CD4-positive, alpha-beta memory T cell (primary cell): ENCODE measurements at regions of chr12 and their contacts with region 1.

Region 1: DNA sequence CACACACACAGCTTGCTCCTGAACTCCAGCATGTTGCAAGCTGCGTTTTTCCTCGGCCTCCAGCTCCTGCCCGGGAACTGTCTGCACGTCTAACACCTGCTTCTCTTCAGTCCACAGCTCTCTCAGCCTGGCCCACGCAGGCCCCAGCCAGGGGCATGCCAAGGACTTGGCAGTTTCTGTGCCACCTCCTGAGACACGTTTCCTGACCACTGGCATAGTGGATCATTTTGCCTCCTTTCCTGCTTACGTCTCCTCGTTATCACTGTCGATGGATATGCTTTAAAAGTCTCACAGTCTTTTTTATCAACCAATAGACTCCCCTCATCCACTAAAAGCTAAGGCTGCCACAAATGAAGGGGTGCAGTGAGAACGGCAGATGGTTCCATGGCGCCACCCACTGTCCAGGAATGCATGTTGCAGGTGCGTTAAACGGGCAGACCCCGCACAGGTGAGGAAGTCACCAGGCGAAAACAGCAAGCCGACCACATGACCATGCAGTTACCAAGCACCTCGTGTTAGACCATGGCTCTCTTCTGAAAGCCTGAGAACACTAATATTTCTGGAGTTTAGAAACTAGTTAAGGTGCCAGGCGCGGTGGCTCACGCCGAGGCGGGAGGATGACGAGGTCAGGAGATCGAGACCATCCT is 14.7 kb upstream of the TEAD4 start:
- DNase-seq: peak in 4 of 5 donors; percentile 25 to 29 (median 28)
- H3K4me3 ChIP-seq: no peak overlapping the region
- H3K4me3 Mint-ChIP-seq: peak overlapping the region in 3 of 8 donors; percentile 39 to 57 (median 49)
- H3K27ac ChIP-seq: no peak overlapping the region
- H3K27ac Mint-ChIP-seq: peak overlapping the region in 1 of 7 donors; percentile 51
- H3K4me1 ChIP-seq: no peaks in the 10 kb centered on the region
- H3K4me1 Mint-ChIP-seq: peaks cover 0 to 4% (median 0%) of the 10 kb centered on the region in 4 donors
- H3K27me3 ChIP-seq: no peaks in the 10 kb centered on the region
- H3K27me3 Mint-ChIP-seq: peaks cover 1 to 3% of the 10 kb centered on the region in 2 donors

Region 2: GRCh38 chr12:2884810-2885209 is 59.7 kb before region 1 on chr12:
- CTCF ChIA-PET with region 1: interaction called, 11 read pairs
- POLR2A ChIA-PET with region 1: no interaction called
- intact Hi-C with region 1: no loop called
- DNase-seq: no peak
- H3K4me3 ChIP-seq: no peak overlapping the region
- H3K4me3 Mint-ChIP-seq: peak overlapping the region in 1 of 8 donors; percentile 24
- H3K27ac ChIP-seq: no peak overlapping the region
- H3K27ac Mint-ChIP-seq: peak overlapping the region in 3 of 7 donors; percentile 2 to 78 (median 71)
- H3K4me1 ChIP-seq: peaks cover 15% of the 10 kb centered on the region
- H3K4me1 Mint-ChIP-seq: peaks cover 12 to 29% (median 21%) of the 10 kb centered on the region in 4 donors
- H3K27me3 ChIP-seq: no peaks in the 10 kb centered on the region
- H3K27me3 Mint-ChIP-seq: no peaks in the 10 kb centered on the region